ENCODE measurements at regions of chr3 and their contacts with region 1.

Region 1: DNA sequence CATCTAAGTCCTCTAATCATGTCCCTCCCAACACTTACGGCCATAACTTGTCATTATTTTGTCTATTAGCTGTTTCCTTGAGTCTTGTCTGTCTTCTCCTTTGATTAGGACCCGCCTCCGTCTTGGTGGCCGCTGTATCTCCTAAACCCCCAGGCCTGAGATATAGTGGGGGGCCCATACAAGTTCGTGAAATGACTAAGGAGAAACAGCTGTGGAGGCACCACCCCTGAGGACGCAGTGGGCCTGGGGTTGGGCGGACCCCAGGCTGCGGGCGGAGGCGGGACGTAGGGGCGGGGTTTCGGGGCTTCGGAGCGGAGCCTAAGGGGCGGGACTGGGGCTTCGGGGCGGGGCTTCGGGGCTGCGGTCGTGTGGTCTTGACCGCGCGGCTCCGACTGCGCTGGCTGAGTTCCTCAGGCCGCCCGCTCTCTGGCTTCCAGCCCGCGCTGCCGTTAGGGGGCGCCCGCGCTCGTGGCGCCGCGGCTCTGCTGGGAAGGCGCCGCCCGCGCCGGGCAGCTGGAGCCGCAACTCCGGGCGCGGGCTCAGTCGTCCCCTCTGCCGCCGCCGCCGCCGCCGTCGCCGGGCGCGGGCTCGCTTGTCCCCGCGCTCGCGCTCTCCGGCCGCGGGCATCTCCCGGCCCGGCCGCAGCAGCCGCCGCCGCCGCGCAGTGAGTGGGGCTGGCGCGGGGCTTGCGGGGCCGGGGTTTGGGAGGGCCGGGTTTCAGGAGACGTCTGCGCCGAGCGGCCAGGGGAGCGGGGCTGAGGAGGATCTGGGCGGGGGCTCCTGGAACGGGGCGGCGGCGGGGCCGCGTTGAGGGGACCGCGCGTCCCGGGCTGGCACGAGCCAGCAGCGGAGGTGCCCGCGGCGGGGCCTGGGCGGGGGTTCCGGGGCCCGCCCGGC is at the start of gene KCTD6:
- H3K4me3 Mint-ChIP-seq: peak within 1 kb of the TSS; percentile 82
- H3K27ac Mint-ChIP-seq: peak within 1 kb of the TSS; percentile 86
- H3K4me1 Mint-ChIP-seq: peaks cover 71% of the 10 kb centered on the region
- H3K27me3 Mint-ChIP-seq: no peaks in the 10 kb centered on the region

Region 2: GRCh38 chr3:58317811-58318210 is 173.9 kb before region 1 on chr3:
- intact Hi-C with region 1: loop called (anchors 5 kb)
- H3K4me3 Mint-ChIP-seq: peak overlapping the region; percentile 44
- H3K27ac Mint-ChIP-seq: peak overlapping the region; percentile 90
- H3K4me1 Mint-ChIP-seq: peaks cover 56% of the 10 kb centered on the region
- H3K27me3 Mint-ChIP-seq: no peaks in the 10 kb centered on the region

Region 3: DNA sequence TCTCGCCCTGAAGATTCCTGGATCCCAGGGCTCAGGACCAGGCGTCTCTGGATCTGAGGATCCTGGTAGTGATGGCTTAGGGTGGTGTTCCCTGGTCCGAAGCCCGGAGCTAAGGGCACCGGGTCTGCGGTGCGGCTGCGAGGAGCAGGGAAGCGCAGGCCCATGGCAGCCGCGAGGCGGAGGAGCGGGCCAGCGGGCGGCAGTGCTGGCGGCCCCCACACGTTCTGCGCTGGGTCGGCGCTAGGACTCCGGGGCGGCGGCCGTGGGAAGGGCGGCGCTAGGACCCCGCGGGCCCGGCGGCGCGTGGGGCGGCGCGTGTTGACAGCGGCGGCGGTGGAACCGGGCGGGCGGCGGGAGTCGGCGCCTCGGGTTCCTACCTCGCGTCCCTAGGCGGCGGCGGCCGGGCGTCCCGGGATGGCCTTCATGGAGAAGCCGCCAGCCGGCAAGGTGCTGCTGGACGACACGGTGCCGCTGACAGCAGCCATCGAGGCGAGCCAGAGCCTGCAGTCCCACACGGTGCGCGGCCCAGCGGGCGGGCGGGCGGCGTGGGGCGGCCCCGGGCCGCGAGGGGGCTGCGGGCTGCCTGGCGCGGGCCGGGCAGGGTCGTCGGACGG is 159.1 kb before region 1 on chr3 and contains the start of gene PXK:
- intact Hi-C with region 1: loop called (anchors 2 kb)
- H3K4me3 Mint-ChIP-seq: peak within 1 kb of the TSS; percentile 95
- H3K27ac Mint-ChIP-seq: peak within 1 kb of the TSS; percentile 91
- H3K4me1 Mint-ChIP-seq: peaks cover 39% of the 10 kb centered on the region
- H3K27me3 Mint-ChIP-seq: no peaks in the 10 kb centered on the region

Region 4: DNA sequence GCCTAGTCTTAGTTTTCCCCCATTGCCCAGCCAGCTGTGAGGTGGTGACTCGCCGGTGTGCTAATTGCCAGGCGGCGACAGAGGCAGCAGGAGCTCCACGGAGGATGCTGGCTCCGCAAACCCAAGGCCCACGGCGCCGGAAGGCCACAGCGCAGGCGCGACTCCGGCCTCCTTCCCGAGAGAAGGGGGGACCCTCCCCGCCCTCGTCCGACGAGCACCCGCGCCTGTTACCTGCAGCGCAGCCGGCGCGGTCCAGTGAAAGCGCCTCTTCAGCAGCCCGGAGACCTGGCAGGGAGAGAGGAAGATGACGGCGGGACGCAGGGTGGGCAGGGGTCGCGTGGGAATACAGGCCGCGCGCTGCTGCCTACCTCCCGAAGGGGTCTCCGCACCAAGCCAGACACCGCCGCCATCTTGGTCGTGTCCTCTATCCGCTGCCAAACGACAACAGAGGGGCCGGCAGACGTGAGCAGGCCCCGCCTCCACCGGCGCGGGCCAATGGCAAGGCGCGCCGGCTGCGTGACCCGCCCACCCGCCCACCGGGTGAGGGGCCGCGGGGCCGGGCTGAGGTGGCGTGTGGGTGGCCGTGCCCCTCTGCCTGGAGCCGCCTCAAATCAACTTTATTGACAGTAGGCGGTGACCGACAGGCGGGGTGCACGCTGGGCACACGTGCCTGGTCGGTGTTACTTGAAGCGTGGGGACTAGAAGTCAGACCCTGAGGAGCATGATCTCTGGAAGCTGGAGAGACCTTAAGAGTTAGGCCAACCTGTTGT is 58.2 kb before region 1 on chr3 and contains the start of gene PDHB:
- intact Hi-C with region 1: loop called (anchors 1 kb)
- H3K4me3 Mint-ChIP-seq: peak within 1 kb of the TSS; percentile 83
- H3K27ac Mint-ChIP-seq: peak within 1 kb of the TSS; percentile 95
- H3K4me1 Mint-ChIP-seq: peaks cover 35% of the 10 kb centered on the region
- H3K27me3 Mint-ChIP-seq: no peaks in the 10 kb centered on the region

Region 5: DNA sequence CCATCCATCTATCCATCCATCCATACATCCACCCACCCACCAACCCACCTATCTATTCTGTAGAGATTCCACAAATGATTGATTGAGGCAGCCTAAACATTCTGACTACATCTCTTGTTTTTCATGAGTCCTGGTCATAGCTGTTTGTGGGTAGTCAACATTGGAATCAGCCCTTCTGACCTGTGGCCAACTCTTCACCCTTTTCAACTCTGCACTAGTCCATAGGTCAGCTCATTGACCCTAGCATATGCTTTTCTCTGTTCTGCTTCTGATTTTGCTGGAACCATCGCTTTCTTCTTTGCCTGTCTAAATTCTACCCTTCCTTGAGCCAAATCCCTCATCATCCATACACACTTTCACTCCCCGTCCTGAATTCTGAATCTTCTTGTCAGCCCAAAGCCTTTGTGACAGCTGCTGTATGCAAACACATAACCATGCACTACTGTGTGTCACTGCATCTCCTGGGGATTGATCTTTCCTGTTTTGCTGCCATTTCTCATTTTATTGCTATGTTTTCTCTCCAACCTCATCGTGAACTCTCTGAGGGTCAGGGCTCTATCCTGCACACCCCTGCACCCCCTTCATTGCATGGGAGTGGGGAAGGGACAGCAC is 16.7 kb before region 1 on chr3:
- intact Hi-C with region 1: loop called (anchors 1 kb)
- H3K4me3 Mint-ChIP-seq: peak overlapping the region; percentile 13
- H3K27ac Mint-ChIP-seq: peak overlapping the region; percentile 64
- H3K4me1 Mint-ChIP-seq: peaks cover 93% of the 10 kb centered on the region
- H3K27me3 Mint-ChIP-seq: no peaks in the 10 kb centered on the region

Region 6: DNA sequence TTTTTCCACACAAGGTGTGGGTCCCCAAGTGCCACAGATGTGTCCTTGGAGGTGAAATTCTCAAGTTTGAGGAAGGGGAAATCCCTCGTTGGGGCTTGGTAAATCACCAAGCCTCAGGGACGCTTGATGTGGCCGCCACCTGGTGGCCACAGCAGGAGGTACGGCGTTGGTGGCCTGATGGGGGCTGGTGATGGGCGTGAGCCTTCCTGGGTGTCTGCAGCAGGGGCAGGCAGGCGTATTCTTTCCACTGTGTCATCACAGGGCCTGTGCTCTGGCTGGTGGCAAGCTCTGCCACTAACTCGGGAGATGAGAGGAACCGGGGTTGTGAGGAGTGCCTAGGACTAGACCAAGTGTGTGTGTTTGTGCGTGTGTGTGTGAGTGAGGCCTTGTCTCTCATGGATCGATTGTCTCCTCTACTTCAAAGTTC is 41.1 kb after region 1 on chr3:
- intact Hi-C with region 1: loop called (anchors 2 kb)
- H3K4me3 Mint-ChIP-seq: no peak overlapping the region
- H3K27ac Mint-ChIP-seq: peak overlapping the region; percentile 26
- H3K4me1 Mint-ChIP-seq: peaks cover 39% of the 10 kb centered on the region
- H3K27me3 Mint-ChIP-seq: no peaks in the 10 kb centered on the region

Region 7: GRCh38 chr3:58630076-58630709 is 138.4 kb after region 1 on chr3:
- intact Hi-C with region 1: no loop called
- H3K4me3 Mint-ChIP-seq: no peak overlapping the region
- H3K27ac Mint-ChIP-seq: no peak overlapping the region
- H3K4me1 Mint-ChIP-seq: no peaks in the 10 kb centered on the region
- H3K27me3 Mint-ChIP-seq: peaks cover 5% of the 10 kb centered on the region

Measured in dendritic cell treated with granulocyte-macrophage colony-stimulating factor and Interleukin-4, amounts not matched to agents 40 ng/mL and 50 ng/mL, for 4 days (primary cell).